Gastrocnemius medialis (tissue), 4 donors: ENCODE measurements at regions of chr7 and their contacts with region 1.

Region 1: DNA sequence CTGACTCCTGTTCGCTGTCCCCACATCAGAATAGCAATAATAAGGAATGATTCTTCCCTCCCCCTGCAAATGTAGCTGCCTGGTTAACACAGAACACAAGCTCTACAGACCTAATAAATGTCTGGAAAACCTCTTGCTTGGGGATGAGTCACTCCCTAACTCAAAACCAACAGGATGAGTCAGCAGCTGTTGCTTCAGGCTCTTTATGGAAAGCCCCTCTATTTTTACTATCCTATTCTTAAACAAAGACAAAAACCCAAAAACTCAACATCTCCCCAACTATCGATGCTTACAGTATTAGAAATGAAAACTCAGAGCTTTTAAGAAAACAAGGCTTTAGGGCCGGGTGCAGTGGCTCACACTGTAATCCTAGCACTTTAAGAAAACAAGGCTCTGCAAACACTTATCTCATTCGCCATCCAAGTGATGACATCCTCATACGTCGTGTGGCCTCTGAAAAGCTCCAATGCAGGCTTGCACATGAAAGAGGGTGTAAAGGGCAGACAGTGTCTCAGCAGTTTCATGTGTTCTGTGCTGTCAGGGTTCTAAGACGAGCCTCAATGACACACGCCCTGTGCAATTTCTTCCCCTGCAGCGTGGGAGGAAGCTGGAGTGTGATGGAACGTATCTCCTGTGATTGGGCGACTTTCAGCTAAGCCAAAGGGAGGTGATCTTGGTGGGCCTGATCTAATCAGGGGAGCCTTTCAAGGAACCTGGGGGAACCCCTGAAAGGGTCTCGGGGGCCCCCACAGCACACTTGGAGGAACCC is 70.1 kb downstream of the AMZ1 start:
- DNase-seq: peak in 1 of 2 donors; percentile 57
- ATAC-seq: peak; percentile 63 to 70
- H3K4me3 ChIP-seq: peak overlapping the region in 3 of 4 donors; percentile 3 to 13 (median 7)
- H3K27ac ChIP-seq: peak overlapping the region; percentile 75 to 86 (median 82)
- H3K4me1 ChIP-seq: peaks cover 44 to 45% of the 10 kb centered on the region in 2 donors
- H3K27me3 ChIP-seq: no peaks in the 10 kb centered on the region
- CTCF ChIP-seq: no peak
- POLR2A ChIP-seq: no peak

Region 2: GRCh38 chr7:2720582-2721491 is 37.3 kb before region 1 on chr7:
- in situ Hi-C with region 1: no loop called
- intact Hi-C with region 1: no loop called
- DNase-seq: no peak
- ATAC-seq: no peak
- H3K4me3 ChIP-seq: no peak overlapping the region
- H3K27ac ChIP-seq: no peak overlapping the region
- H3K4me1 ChIP-seq: peaks cover 13 to 15% of the 10 kb centered on the region in 2 donors
- H3K27me3 ChIP-seq: no peaks in the 10 kb centered on the region
- CTCF ChIP-seq: no peak
- POLR2A ChIP-seq: no peak

Region 3: DNA sequence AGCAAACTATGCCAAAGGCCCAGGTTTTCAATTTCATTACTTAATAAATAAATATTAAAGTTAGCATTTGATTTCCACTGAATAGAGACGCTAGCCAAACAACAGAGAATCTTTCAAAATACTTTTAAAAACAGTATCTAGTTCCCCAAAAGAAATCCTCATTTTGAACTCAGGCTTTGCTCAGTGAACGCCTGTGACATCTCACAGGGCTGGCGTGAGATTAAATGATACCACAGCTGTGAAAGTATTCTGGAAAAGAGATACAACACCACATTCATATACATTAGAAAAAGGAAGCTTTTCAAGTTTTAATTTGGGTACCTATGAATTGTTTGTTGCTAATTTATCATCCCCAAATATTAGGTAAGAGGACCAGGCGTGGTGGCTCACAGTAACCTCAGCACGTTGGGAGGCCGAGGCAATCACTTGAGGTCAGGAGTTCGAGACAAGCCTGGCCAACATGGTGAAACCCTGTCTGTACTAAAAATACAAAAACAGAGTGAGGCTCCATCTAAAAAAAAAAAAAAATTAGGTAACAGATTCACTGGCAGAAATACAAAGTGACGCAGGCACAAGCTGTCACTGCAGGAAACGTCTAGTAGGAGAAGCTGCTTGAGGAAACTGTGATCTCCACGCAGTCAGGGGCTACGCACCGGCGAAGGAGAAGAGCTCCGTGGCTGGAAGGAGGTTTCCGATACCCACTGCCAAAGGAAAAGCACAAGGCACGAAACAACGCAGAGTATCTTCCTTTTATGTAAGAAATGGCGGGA is 20.1 kb before region 1 on chr7:
- in situ Hi-C with region 1: no loop called
- intact Hi-C with region 1: loop called (anchors 2 kb)
- DNase-seq: peak; percentile 17 to 69
- ATAC-seq: peak; percentile 51 to 79
- H3K4me3 ChIP-seq: no peak overlapping the region
- H3K27ac ChIP-seq: peak overlapping the region in 3 of 4 donors; percentile 10 to 39 (median 25)
- H3K4me1 ChIP-seq: peaks cover 17 to 20% of the 10 kb centered on the region in 2 donors
- H3K27me3 ChIP-seq: no peaks in the 10 kb centered on the region
- CTCF ChIP-seq: no peak
- POLR2A ChIP-seq: peak in 1 of 2 donors; percentile 25

Region 4: GRCh38 chr7:2796358-2797352 is 38.6 kb after region 1 on chr7:
- in situ Hi-C with region 1: no loop called
- intact Hi-C with region 1: loop called (anchors 5 kb)
- DNase-seq: peak; percentile 32 to 67
- ATAC-seq: peak; percentile 75 to 78
- H3K4me3 ChIP-seq: peak overlapping the region in 2 of 4 donors; percentile 2 to 13
- H3K27ac ChIP-seq: peak overlapping the region; percentile 38 to 72 (median 58)
- H3K4me1 ChIP-seq: peaks cover 13 to 21% of the 10 kb centered on the region in 2 donors
- H3K27me3 ChIP-seq: no peaks in the 10 kb centered on the region
- CTCF ChIP-seq: no peak
- POLR2A ChIP-seq: no peak

Region 5: GRCh38 chr7:2844165-2844898 is 86.2 kb after region 1 on chr7 and contains the start of gene GNA12:
- in situ Hi-C with region 1: no loop called
- intact Hi-C with region 1: loop called (anchors 2 kb)
- DNase-seq: peak; percentile 97 to 99
- ATAC-seq: peak; percentile 98
- H3K4me3 ChIP-seq: peak within 1 kb of the TSS; percentile 53 to 81 (median 67)
- H3K27ac ChIP-seq: peak within 1 kb of the TSS; percentile 60 to 75 (median 74)
- H3K4me1 ChIP-seq: peaks cover 12 to 13% of the 10 kb centered on the region in 2 donors
- H3K27me3 ChIP-seq: no peaks in the 10 kb centered on the region
- CTCF ChIP-seq: no peak
- POLR2A ChIP-seq: peak; percentile 48 to 61
- total RNA-seq, gene GNA12: 7.6 to 8.4 (median 8.1) TPM

Region 6: DNA sequence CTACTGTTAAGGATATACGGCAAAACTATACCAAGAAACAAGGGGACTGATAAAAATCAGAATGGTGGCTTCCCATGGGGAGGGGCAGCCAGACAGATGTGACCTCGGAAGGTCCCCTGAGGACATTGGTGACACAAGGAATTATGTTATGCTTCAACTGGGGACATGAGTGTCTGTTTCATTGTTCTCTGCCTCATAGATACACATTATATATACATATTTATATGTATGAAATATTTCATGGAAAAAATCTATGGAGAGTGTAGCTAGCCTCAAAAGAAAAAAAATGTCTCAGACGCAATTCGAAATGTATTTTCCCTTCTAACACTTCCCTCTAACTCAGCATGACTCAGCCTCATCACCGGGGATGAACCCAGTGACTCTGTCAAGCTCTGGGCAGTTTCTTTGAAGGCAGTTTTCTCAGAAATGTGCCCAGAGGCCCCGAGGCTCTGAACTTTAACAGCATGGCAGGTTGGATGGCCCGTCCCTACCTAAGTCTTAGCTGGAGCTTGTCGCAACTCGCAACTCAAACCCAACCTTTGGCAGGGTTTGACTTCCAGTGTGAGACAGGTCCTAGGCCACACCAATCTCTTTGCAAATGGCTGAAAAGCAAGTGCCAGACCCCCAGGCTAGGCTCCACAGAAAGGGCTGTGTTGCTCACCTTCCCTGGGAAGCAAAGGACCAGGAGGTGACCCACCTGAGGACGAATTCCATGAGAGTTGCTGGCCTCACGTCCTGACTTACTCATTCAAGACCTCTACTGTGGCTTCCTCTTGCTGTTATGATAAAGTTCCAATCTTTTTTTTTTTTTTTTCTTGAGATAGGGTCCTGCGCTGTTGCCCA is 198.7 kb after region 1 on chr7:
- in situ Hi-C with region 1: no loop called
- intact Hi-C with region 1: no loop called
- DNase-seq: no peak
- ATAC-seq: no peak
- H3K4me3 ChIP-seq: no peak overlapping the region
- H3K27ac ChIP-seq: no peak overlapping the region
- H3K4me1 ChIP-seq: no peaks in the 10 kb centered on the region
- H3K27me3 ChIP-seq: peaks cover 0 to 6% (median 3%) of the 10 kb centered on the region in 3 donors
- CTCF ChIP-seq: no peak
- POLR2A ChIP-seq: no peak

Region 7: GRCh38 chr7:3393862-3394261 is 635.8 kb after region 1 on chr7:
- in situ Hi-C with region 1: no loop called
- intact Hi-C with region 1: no loop called
- DNase-seq: no peak
- ATAC-seq: no peak
- H3K4me3 ChIP-seq: no peak overlapping the region
- H3K27ac ChIP-seq: no peak overlapping the region
- H3K4me1 ChIP-seq: no peaks in the 10 kb centered on the region
- H3K27me3 ChIP-seq: no peaks in the 10 kb centered on the region
- CTCF ChIP-seq: no peak
- POLR2A ChIP-seq: no peak

Region 8: GRCh38 chr7:3649250-3649649 is 891.2 kb after region 1 on chr7:
- in situ Hi-C with region 1: no loop called
- intact Hi-C with region 1: no loop called
- DNase-seq: no peak
- ATAC-seq: no peak
- H3K4me3 ChIP-seq: no peak overlapping the region
- H3K27ac ChIP-seq: no peak overlapping the region
- H3K4me1 ChIP-seq: no peaks in the 10 kb centered on the region
- H3K27me3 ChIP-seq: no peaks in the 10 kb centered on the region
- CTCF ChIP-seq: no peak
- POLR2A ChIP-seq: no peak

Region 9: GRCh38 chr7:4738711-4739527 is 1980.8 kb after region 1 on chr7:
- in situ Hi-C with region 1: no loop called
- intact Hi-C with region 1: loop called (anchors 5 kb)
- DNase-seq: peak in 1 of 2 donors; percentile 57
- ATAC-seq: peak; percentile 15 to 42
- H3K4me3 ChIP-seq: peak overlapping the region; percentile 34 to 56 (median 47)
- H3K27ac ChIP-seq: peak overlapping the region; percentile 83 to 94 (median 92)
- H3K4me1 ChIP-seq: peaks cover 48 to 59% of the 10 kb centered on the region in 2 donors
- H3K27me3 ChIP-seq: no peaks in the 10 kb centered on the region
- CTCF ChIP-seq: no peak
- POLR2A ChIP-seq: peak in 1 of 2 donors; percentile 13